Vagina (tissue), 2 donors: ENCODE measurements at regions of chr15 and their contacts with region 1.

Region 1: GRCh38 chr15:101008158-101009139 is 89.3 kb downstream of the LRRK1 start:
- DNase-seq: peak; percentile 87 to 89
- H3K4me3 ChIP-seq: peak overlapping the region; percentile 29 to 37
- H3K27ac ChIP-seq: no peak overlapping the region
- H3K4me1 ChIP-seq: peaks cover 18% of the 10 kb centered on the region
- H3K27me3 ChIP-seq: no peaks in the 10 kb centered on the region
- CTCF ChIP-seq: peak; percentile 64 to 75 (median 75)
- POLR2A ChIP-seq: no peak

Region 2: DNA sequence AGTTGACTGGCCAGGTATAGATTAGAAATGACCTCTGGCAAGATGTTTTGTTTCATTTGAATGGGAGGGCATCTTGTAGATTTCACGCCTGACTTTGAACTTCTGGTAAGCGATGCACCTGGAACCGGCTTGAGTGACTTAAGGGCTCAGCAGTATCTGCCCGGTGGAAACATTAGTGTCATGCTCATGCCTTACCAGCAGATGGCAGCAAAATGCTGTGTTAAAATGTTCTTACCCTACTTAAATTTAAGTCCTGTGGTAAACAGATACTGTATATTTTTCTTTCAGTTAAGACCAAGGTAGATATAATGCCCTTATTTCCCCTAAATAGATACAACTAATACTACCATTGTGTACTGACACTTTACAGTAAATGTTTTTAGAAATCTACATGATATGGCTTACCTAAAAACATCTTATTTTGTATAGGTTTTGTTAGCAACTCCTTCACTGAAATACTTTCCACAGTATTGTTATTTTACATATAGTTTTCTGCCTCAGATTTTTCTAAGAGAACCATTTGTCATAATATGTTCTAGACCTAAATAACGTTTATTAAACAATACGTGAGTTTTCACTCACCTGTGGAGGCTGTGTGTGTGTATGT is 380.6 kb before region 1 on chr15:
- intact Hi-C with region 1: loop called (anchors 5 kb)
- DNase-seq: no peak
- H3K4me3 ChIP-seq: no peak overlapping the region
- H3K27ac ChIP-seq: peak overlapping the region; percentile 61
- H3K4me1 ChIP-seq: peaks cover 9% of the 10 kb centered on the region
- H3K27me3 ChIP-seq: no peaks in the 10 kb centered on the region
- CTCF ChIP-seq: peak; percentile 84 to 93 (median 92)
- POLR2A ChIP-seq: no peak

Region 3: DNA sequence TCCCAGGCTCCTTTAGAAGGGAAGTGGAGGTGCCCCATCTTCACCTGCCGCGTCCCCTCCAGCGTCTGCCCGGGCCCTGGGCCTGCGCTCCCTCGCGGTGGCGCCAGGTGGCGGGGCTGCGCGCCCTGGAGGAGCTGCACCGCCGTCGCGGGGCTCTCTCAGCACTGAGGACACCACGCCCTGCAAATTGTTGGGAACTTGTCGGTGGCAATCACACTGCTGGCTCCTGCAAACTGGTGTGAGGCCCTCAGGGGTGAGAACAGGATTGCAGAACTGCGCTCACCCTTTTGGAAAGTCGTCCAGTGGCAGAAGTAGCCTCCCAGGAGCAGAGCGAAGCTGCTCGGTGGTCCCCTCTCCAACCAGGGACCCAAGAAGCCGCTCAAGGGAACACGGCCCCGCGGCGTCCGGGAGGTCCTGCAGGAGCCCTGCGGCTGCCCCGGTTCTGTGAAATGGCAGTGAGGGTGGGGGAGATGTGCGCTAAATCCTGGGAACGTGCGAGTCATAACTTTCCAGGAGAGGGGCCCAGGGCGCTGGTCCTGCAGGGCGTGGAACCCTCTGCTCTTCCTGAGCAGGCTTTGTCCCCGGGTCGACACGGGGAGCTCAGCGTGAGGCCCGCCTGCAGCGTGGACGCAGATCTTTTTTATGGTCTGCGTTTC is 90.3 kb before region 1 on chr15:
- intact Hi-C with region 1: loop called (anchors 1 kb)
- DNase-seq: no peak
- H3K4me3 ChIP-seq: peak overlapping the region; percentile 78 to 83
- H3K27ac ChIP-seq: peak overlapping the region; percentile 88
- H3K4me1 ChIP-seq: peaks cover 35% of the 10 kb centered on the region
- H3K27me3 ChIP-seq: no peaks in the 10 kb centered on the region
- CTCF ChIP-seq: peak; percentile 75 to 91 (median 90)
- POLR2A ChIP-seq: no peak

Region 4: GRCh38 chr15:100968050-100968966 is 40.1 kb before region 1 on chr15:
- intact Hi-C with region 1: no loop called
- DNase-seq: no peak
- H3K4me3 ChIP-seq: no peak overlapping the region
- H3K27ac ChIP-seq: no peak overlapping the region
- H3K4me1 ChIP-seq: peaks cover 6% of the 10 kb centered on the region
- H3K27me3 ChIP-seq: no peaks in the 10 kb centered on the region
- CTCF ChIP-seq: no peak
- POLR2A ChIP-seq: no peak

Region 5: GRCh38 chr15:101262551-101262950 is 254.1 kb after region 1 on chr15:
- intact Hi-C with region 1: loop called (anchors 2 kb)
- DNase-seq: no peak
- H3K4me3 ChIP-seq: no peak overlapping the region
- H3K27ac ChIP-seq: no peak overlapping the region
- H3K4me1 ChIP-seq: peaks cover 11% of the 10 kb centered on the region
- H3K27me3 ChIP-seq: no peaks in the 10 kb centered on the region
- CTCF ChIP-seq: no peak
- POLR2A ChIP-seq: no peak

Region 6: DNA sequence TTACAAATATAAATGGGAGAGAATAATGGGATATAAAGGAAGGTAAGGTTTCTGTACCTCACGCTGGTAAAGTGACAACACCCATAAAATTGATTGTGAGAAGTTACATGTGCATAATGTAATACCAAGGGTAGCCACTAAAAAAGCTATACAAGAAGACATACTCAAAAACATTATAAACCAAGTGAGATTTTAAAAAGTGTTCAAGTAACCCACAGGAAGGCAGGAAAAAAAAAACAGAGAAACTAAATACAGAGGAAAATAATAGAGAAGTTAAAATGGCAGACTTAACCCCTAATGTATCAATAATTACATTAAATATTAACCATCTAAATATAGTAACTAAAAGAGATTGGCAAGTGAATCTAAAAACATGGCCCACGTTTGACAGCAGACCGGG is 404.8 kb after region 1 on chr15:
- intact Hi-C with region 1: no loop called
- DNase-seq: no peak
- H3K4me3 ChIP-seq: no peak overlapping the region
- H3K27ac ChIP-seq: no peak overlapping the region
- H3K4me1 ChIP-seq: no peaks in the 10 kb centered on the region
- H3K27me3 ChIP-seq: no peaks in the 10 kb centered on the region
- CTCF ChIP-seq: no peak
- POLR2A ChIP-seq: no peak